ENCODE measurements at regions of chr2 and their contacts with region 1.

Region 1: GRCh38 chr2:98412751-98413458 is 31.8 kb upstream of the INPP4A start:
- DNase-seq: peak; percentile 71
- H3K4me3 ChIP-seq: no peak overlapping the region
- H3K27ac ChIP-seq: no peak overlapping the region
- H3K4me1 ChIP-seq: no peaks in the 10 kb centered on the region
- CTCF ChIP-seq: peak; percentile 88

Region 2: DNA sequence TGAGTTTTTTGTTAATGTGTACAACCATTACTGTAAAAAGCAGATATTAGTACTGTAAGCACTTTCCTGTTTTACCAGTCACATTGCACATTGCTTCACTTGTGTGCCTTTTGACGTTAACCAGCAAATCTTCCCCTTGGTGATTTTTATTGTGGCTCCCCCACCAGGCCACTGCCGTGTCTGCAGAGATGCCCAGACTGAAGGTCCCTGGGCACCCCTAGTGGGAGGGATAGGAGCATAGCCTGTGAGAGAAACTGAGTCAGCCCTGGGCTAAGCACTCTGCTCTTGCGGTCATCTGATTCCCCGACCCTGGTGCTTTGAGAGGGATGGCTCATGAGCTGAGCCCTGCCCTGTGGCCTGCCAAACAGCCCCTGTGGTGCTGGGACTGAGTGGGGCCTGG is 105.2 kb after region 1 on chr2:
- CTCF ChIA-PET with region 1: no interaction called
- POLR2A ChIA-PET with region 1: no interaction called
- intact Hi-C with region 1: loop called (anchors 2 kb)
- DNase-seq: peak; percentile 32
- H3K4me3 ChIP-seq: no peak overlapping the region
- H3K27ac ChIP-seq: no peak overlapping the region
- H3K4me1 ChIP-seq: no peaks in the 10 kb centered on the region
- CTCF ChIP-seq: peak; percentile 79

Region 3: GRCh38 chr2:98601532-98602132 is 188.7 kb after region 1 on chr2:
- CTCF ChIA-PET with region 1: no interaction called
- POLR2A ChIA-PET with region 1: interaction called, 4 read pairs
- intact Hi-C with region 1: loop called (anchors 1 kb)
- DNase-seq: peak; percentile 57
- H3K4me3 ChIP-seq: no peak overlapping the region
- H3K27ac ChIP-seq: no peak overlapping the region
- H3K4me1 ChIP-seq: peaks cover 8% of the 10 kb centered on the region
- CTCF ChIP-seq: peak; percentile 90

Measured in OCI-LY7 (cell line).